Caco-2 (cell line): ENCODE measurements at regions of chr4 and their contacts with region 1.

Region 1: DNA sequence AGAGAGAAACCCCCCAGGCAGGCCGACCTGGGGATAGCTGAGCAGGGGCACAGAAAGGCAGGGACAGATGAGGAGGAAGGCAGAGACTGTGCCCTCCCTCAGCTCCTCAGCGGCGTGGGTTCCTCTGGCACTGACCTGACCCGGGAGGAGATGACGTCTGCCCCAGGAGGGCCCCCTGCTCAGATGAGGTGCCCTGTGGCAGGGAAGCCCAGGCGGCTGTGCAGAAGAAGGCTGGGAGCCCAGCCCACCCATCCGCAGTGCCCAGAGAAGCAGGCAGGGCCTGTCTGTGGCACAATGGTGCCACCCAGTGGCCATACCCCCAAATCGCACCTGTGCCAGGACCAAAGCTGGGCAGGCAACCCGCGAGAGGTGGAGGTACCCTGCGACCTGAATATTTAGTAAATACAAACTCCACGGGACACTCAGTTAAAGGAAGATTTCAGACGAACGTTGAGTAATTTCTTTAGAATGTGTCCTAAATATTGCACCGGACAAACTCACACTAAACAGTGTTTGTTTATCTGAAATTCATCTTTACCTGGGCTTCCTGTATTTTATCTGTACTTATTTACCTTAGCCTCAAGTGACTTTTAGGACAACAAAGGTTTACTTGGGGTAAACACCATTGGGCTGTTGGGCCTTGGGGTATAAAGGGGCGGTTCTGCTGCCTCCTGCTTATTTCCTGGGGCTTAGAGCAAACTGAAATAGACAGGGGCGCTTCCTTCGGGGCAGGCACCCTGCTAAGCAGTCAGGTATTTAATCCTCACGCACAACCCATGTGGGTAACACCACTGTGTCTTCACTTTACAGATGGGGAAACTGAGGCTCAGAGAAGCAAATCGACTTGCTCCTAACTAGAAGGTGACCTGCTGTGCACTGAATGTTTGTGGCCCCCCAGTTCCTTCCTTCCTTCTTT is 46.5 kb upstream of the HMX1 start:
- DNase-seq: peak; percentile 54 to 80
- H3K4me3 ChIP-seq: no peak overlapping the region
- H3K4me3 Mint-ChIP-seq: no peak overlapping the region
- H3K27ac Mint-ChIP-seq: no peak overlapping the region
- H3K4me1 ChIP-seq: no peaks in the 10 kb centered on the region
- H3K4me1 Mint-ChIP-seq: no peaks in the 10 kb centered on the region
- H3K27me3 ChIP-seq: no peaks in the 10 kb centered on the region
- H3K27me3 Mint-ChIP-seq: peaks cover 11% of the 10 kb centered on the region
- CTCF ChIP-seq: peak; percentile 76 to 89

Region 2: DNA sequence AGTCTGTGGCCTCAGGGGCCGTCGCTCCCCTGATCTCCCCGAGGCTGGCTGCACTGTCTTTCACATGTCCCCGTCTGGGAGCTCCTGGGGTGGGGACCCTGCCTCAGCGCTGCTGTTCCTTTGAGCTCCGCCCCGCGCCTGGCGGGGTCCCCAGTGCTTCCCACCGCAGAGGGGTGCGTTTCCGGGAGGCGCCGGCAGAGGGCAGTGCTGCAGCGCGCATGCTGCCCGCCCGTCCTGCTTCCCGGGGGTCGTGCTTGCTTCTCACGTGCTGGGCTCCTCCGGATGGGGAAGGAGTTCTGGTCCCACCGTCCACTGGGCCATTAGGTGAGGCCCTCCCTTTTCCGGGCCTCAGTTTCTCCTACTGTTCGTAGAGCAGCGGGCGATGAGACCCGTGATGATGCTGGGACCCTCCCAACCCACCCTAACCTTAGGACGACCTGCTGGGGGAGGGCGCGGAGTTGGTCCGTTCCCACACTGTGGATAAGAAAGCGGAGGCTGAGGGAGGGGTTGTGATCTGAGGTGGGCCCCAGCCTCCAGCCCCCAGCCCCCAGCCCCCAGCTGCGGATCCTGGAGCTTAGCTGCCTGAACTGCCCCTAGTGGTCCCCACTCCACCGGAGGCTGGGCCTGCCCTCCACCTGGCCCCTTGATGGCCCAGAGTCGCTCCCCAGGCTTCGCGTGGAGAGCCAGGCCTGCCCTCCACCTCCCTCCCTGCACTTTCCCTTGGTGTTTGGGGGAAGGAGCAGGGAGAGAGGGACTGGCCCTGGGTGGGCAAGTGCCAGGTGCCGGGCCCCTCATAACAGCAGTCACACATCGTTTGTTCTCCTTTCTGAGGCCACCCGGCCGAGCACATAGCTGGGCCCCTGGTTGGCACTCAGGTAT is 310.3 kb before region 1 on chr4:
- CTCF ChIA-PET with region 1: interaction called, 12 read pairs
- POLR2A ChIA-PET with region 1: no interaction called
- intact Hi-C with region 1: loop called (anchors 10 kb)
- DNase-seq: peak in 1 of 2 experiments; percentile 76
- H3K4me3 ChIP-seq: no peak overlapping the region
- H3K4me3 Mint-ChIP-seq: no peak overlapping the region
- H3K27ac Mint-ChIP-seq: no peak overlapping the region
- H3K4me1 ChIP-seq: no peaks in the 10 kb centered on the region
- H3K4me1 Mint-ChIP-seq: no peaks in the 10 kb centered on the region
- H3K27me3 ChIP-seq: no peaks in the 10 kb centered on the region; the same call in 1 of the 2 replicates
- H3K27me3 Mint-ChIP-seq: peaks cover 10% of the 10 kb centered on the region
- CTCF ChIP-seq: peak; percentile 90 to 96

Region 3: DNA sequence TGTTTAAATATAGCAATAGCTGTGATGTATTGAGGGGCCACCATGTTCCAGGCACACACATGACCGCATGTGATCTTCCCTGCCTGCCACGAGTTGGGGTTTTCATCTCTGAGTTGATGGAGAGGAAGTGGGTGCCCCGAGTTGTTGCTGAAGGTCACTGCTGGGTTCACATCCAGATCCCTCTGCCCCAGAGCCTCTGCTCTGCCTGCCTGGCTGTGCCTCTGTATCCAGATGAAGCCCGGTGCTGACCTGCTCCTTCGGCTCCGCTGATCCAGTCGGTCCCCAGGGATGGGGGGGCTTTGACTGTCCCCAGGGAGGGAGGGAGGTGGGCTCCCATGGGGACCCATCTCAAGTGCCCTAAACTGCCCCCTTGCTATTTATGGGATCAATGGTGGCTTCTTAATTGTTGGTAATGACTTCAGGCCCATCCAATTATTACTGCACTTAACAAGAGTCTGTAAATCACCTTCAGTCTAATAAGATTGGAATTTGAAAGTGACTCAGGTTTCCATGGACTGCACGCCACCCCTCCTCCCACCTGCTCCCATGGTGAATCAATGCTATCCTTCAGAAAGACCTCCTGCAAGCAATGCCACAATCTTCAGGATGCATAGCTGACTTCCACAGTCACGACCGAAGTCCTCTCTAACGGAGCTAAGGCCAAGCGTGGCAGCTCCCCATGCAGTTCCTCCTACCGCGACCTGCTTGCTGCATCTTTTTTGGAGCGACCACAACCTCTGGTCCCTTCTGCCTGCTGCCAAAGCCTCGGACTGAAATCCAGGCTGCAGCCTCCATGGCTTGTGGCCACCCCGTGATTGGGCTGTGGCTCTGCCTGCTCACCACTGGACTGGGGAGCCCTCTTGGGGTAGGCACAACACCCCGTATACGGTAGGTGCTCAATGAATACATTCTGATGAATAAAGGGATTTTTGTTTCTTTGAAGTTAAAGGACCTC is 252.4 kb before region 1 on chr4:
- CTCF ChIA-PET with region 1: no interaction called
- POLR2A ChIA-PET with region 1: no interaction called
- intact Hi-C with region 1: no loop called
- DNase-seq: no peak
- H3K4me3 ChIP-seq: no peak overlapping the region
- H3K4me3 Mint-ChIP-seq: no peak overlapping the region
- H3K27ac Mint-ChIP-seq: no peak overlapping the region
- H3K4me1 ChIP-seq: no peaks in the 10 kb centered on the region
- H3K4me1 Mint-ChIP-seq: no peaks in the 10 kb centered on the region
- H3K27me3 ChIP-seq: no peaks in the 10 kb centered on the region
- H3K27me3 Mint-ChIP-seq: peaks cover 12% of the 10 kb centered on the region
- CTCF ChIP-seq: no peak